Naive thymus-derived CD4-positive, alpha-beta T cell (primary cell): ENCODE measurements at regions of chr18 and their contacts with region 1.

Region 1: GRCh38 chr18:3593904-3594661 is 144.1 kb downstream of the TGIF1 start:
- DNase-seq: peak; percentile 71 to 96 (median 93)
- ATAC-seq: peak; percentile 82
- H3K4me3 ChIP-seq: peak overlapping the region; percentile 73
- H3K4me3 Mint-ChIP-seq: peak overlapping the region; percentile 84 to 97 (median 93)
- H3K27ac ChIP-seq: peak overlapping the region; percentile 89
- H3K27ac Mint-ChIP-seq: peak overlapping the region; percentile 98 to 100 (median 99)
- H3K4me1 ChIP-seq: peaks cover 31 to 40% of the 10 kb centered on the region in 2 donors
- H3K4me1 Mint-ChIP-seq: peaks cover 32 to 66% (median 57%) of the 10 kb centered on the region in 7 donors
- H3K27me3 ChIP-seq: no peaks in the 10 kb centered on the region
- H3K27me3 Mint-ChIP-seq: no peaks in the 10 kb centered on the region

Region 2: DNA sequence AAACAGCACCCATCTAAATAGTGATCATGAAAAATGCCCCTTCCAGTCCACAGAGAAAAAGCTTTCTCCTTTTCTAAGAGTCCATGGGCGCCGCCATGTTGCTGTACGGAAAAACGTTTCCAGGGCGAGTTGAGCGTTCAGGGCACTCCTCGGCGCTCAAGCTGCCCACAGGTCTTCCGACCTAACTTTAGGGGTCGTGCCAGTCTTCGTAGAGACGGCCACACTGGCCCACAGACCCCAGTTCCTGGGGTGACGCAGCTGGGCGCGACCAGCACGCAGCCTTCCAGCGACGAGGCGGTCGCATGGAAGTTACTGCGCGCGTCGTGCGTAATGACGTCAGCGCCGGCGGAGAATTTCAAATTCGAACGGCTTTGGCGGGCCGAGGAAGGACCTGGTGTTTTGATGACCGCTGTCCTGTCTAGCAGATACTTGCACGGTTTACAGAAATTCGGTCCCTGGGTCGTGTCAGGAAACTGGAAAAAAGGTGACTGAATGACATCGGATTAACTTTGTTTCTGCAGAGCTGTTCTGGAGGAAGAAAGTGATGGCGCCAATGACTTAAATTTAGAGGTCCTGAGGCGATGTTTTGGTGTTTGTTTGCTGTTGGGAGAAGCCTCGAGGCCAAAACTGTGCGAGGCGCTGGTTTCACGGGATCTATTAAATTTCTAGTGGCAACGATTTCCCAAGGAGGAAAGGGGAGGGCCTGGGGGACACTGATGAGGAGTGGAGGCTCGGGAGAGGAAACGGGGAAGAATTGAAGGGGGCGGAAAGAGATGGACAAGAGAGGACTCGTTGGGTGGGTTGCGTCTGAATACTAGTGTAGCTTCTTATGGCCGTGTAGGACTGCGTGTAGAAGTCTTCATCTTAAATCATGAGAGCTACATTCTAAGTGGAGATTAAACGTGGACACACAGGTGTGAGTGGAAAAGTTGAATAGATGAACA is 1022.6 kb before region 1 on chr18 and contains the starts of genes METTL4 and NDC80:
- CTCF ChIA-PET with region 1: no interaction called
- POLR2A ChIA-PET with region 1: no interaction called
- intact Hi-C with region 1: loop called in 1 of 2 experiments (anchors 10 kb)
- DNase-seq: peak; percentile 70 to 90 (median 82)
- ATAC-seq: peak; percentile 87
- H3K4me3 ChIP-seq: peak within 1 kb of the TSS; percentile 88
- H3K4me3 Mint-ChIP-seq: peak within 1 kb of the TSS; percentile 96 to 100 (median 99)
- H3K27ac ChIP-seq: peak within 1 kb of the TSS; percentile 97
- H3K27ac Mint-ChIP-seq: peak within 1 kb of the TSS; percentile 98 to 100 (median 100)
- H3K4me1 ChIP-seq: peaks cover 10 to 13% of the 10 kb centered on the region in 2 donors
- H3K4me1 Mint-ChIP-seq: peaks cover 38 to 63% (median 59%) of the 10 kb centered on the region in 7 donors
- H3K27me3 ChIP-seq: no peaks in the 10 kb centered on the region
- H3K27me3 Mint-ChIP-seq: no peaks in the 10 kb centered on the region
- total RNA-seq, gene METTL4: 13.8 to 32.5 (median 22.8) TPM
- total RNA-seq, gene NDC80: 2.4 to 53.6 (median 2.7) TPM

Region 3: DNA sequence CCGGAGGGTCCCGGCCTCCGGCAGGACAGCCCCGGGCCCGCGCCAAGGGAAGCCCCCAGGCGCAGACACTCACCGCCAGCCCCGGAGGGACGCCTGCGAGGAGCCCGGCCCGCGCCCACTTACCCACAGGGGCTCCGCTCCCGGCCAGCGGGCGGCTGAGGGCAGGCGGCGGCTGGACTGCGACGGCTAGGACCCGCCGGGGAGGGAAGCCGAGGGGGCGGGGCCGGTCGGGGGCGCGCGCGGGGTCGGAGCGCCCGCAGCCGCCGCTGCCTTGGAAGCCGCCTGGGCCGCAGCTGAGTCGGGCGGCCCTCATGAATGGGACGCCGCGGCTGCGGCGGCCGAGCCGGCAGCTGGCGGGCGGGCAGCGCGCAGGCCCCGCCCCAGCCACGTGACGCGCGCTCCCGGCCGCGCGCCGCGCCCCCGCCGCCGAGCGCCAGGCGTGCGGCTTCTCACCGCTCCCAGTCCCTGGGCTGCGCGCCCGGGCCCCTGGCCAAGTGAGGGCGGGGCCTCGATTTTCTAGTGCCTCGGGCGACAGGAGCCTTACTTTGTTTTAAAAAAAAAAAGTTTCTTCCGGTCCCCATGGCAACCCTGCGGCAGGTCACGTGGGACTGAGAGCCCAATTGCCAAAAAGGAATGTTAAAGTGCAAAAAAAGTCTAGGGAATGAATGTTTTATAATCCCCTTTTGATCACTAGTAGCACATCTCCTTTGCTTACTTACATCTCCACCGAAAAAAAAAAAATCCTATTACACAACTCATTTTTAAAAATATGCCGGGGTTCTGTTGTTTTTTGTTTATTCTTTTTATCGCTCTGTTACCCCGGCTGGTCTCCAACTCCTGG is 580.9 kb before region 1 on chr18 and contains the start of gene LPIN2:
- CTCF ChIA-PET with region 1: interaction called, 8 read pairs
- POLR2A ChIA-PET with region 1: no interaction called
- intact Hi-C with region 1: loop called in 1 of 2 experiments (anchors 1 kb)
- DNase-seq: peak; percentile 96 to 98 (median 98)
- ATAC-seq: peak; percentile 92
- H3K4me3 ChIP-seq: peak within 1 kb of the TSS; percentile 61
- H3K4me3 Mint-ChIP-seq: peak within 1 kb of the TSS; percentile 93 to 99 (median 95)
- H3K27ac ChIP-seq: peak within 1 kb of the TSS; percentile 84
- H3K27ac Mint-ChIP-seq: peak within 1 kb of the TSS; percentile 91 to 98 (median 95)
- H3K4me1 ChIP-seq: peaks cover 8 to 61% of the 10 kb centered on the region in 2 donors
- H3K4me1 Mint-ChIP-seq: peaks cover 56 to 79% (median 74%) of the 10 kb centered on the region in 7 donors
- H3K27me3 ChIP-seq: no peaks in the 10 kb centered on the region
- H3K27me3 Mint-ChIP-seq: no peaks in the 10 kb centered on the region
- total RNA-seq, gene LPIN2: 58.8 to 133 (median 73.6) TPM

Region 4: GRCh38 chr18:3297025-3297984 is 296.8 kb before region 1 on chr18:
- CTCF ChIA-PET with region 1: interaction called, 12 read pairs
- POLR2A ChIA-PET with region 1: interaction called, 14 read pairs
- intact Hi-C with region 1: loop called (anchors 1 kb)
- DNase-seq: peak; percentile 74 to 93 (median 90)
- ATAC-seq: peak; percentile 100
- H3K4me3 ChIP-seq: peak overlapping the region; percentile 60
- H3K4me3 Mint-ChIP-seq: peak overlapping the region; percentile 89 to 98 (median 95)
- H3K27ac ChIP-seq: peak overlapping the region; percentile 62
- H3K27ac Mint-ChIP-seq: peak overlapping the region; percentile 21 to 93 (median 84)
- H3K4me1 ChIP-seq: peaks cover 6 to 9% of the 10 kb centered on the region in 2 donors
- H3K4me1 Mint-ChIP-seq: peaks cover 0 to 16% (median 10%) of the 10 kb centered on the region in 7 donors
- H3K27me3 ChIP-seq: no peaks in the 10 kb centered on the region
- H3K27me3 Mint-ChIP-seq: peaks cover 13 to 41% (median 30%) of the 10 kb centered on the region in 5 donors

Region 5: DNA sequence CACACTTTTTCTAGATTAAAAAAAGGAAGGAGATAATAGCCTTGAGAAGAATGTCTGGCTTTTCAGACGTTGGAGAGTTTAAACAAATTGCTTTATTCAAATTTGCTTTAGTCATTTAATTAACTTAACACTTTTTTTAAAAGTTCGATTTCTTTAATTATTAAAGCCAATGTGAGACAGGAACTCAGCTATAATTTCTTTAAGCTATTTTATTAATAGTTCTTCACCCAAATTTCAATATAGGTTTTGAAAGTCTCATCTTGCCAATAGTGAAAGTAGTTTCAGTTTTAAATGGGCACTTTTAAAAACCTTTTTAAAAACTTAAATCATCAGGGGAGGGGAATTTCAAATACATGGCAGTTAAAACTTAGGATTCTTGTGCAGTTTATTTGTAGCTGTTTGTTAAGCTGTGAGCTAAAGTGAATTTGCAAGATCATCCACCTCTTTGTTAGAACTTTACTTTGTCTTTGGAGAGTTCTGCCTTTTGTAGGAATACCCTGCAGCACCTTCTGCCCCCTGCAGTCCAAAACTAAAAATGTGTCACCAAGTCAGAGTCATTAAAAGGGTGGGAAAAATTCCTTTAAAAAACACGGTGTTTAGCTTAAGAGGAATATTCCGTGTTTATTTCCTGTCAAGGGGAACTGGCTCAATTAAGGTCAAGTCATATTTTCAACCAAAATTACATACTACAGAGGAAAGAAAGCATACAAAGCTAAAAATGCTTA is 139.6 kb before region 1 on chr18:
- CTCF ChIA-PET with region 1: interaction called, 29 read pairs
- POLR2A ChIA-PET with region 1: interaction called, 109 read pairs
- intact Hi-C with region 1: loop called (anchors 1 kb)
- DNase-seq: peak in 7 of 9 donors; percentile 40 to 64 (median 60)
- ATAC-seq: no peak
- H3K4me3 ChIP-seq: peak overlapping the region; percentile 48
- H3K4me3 Mint-ChIP-seq: peak overlapping the region; percentile 85 to 96 (median 94)
- H3K27ac ChIP-seq: peak overlapping the region; percentile 96
- H3K27ac Mint-ChIP-seq: peak overlapping the region; percentile 89 to 100 (median 99)
- H3K4me1 ChIP-seq: peaks cover 15 to 35% of the 10 kb centered on the region in 2 donors
- H3K4me1 Mint-ChIP-seq: peaks cover 22 to 70% (median 32%) of the 10 kb centered on the region in 7 donors
- H3K27me3 ChIP-seq: no peaks in the 10 kb centered on the region
- H3K27me3 Mint-ChIP-seq: no peaks in the 10 kb centered on the region

Region 6: DNA sequence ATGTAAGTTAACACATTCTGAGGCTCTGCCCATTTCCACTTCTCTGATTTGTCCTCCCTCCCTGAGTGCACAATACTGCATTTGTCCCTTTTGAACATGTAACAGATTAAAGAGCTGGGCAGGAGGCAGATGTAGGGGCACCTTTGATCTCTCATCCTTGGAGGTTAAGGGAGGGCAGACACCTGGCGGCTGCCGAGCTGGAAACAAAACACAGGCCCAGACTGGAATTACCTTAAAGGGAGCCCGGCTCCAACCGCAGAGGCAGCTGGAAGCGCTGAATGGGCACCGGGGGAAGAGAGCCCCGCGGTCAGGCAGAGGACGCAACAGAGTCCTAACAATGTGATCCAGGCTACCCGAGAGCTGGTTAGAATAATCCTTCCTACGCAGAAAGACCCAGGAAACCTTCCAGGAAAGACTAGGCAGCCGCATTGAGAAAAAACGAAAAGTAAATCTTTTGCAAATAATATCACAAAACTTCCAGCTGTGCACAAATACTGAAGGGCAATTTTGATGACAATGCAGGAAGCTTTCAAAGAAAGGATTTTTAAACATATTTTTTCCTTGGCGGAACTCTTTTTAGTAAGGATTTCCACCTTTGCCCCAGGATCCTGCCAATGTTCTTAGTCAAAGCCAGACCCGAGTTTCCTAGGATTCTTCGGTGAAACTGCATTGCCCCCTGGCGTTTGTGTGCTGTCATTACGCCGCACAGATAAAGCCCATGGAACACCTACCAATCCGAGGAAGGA is 71.9 kb after region 1 on chr18:
- CTCF ChIA-PET with region 1: interaction called, 35 read pairs
- POLR2A ChIA-PET with region 1: interaction called, 7 read pairs
- intact Hi-C with region 1: loop called (anchors 1 kb)
- DNase-seq: peak; percentile 33 to 78 (median 60)
- ATAC-seq: peak; percentile 84
- H3K4me3 ChIP-seq: no peak overlapping the region
- H3K4me3 Mint-ChIP-seq: peak overlapping the region in 9 of 10 donors; percentile 38 to 62 (median 50)
- H3K27ac ChIP-seq: no peak overlapping the region
- H3K27ac Mint-ChIP-seq: peak overlapping the region in 2 of 9 donors; percentile 31 to 84
- H3K4me1 ChIP-seq: no peaks in the 10 kb centered on the region
- H3K4me1 Mint-ChIP-seq: peaks cover 0 to 26% (median 8%) of the 10 kb centered on the region in 7 donors
- H3K27me3 ChIP-seq: no peaks in the 10 kb centered on the region
- H3K27me3 Mint-ChIP-seq: peaks cover 0 to 5% (median 0%) of the 10 kb centered on the region in 5 donors